Mammary epithelial cell (primary cell): ENCODE measurements at regions of chr20 and their contacts with region 1.

Region 1: DNA sequence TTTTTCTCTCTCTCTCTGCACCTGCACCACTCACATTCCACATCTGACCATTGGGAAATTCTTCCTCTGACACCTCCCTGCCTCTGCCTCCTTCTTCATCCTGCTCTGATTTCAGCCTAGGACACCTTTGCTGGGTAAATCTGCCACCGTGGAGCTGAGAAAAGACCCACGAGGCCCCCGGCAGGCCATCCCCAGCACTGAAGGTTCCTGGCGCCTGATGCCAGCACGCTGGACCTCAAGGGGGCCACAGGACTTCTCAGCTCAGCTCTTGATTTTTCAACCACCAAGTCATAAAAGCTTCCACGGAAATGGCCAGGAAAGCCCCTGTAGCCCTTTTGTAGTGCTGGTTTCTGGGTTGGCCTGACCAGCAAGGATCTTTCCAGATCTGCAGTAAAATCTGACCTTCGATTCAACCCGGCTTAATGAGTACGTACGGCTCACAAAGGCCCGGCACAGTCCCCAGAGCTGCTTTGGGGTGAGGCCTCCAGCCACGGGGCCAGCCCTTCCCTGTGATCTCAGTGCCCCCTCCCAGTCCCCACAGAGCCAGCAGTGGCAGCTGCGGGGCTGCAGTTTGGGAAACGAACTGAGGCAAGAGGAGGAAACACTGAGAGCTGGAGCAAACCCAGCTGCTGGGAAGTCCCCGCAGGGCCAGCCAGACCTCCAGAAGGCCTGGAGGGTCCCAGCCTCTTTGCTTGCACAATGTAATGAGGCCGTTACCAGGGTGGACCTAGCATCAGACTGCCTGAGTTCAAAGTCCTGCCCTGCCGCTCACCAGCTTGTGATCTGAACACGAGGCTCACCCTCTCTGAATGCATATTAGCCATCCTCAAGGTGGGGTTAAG is 157.5 kb downstream of the BMP7 start:
- DNase-seq: no peak
- H3K4me3 ChIP-seq: no peak overlapping the region
- H3K27ac ChIP-seq: no peak overlapping the region
- H3K4me1 ChIP-seq: no peaks in the 10 kb centered on the region
- H3K27me3 ChIP-seq: no peaks in the 10 kb centered on the region
- CTCF ChIP-seq: no peak

Region 2: GRCh38 chr20:57061058-57061900 is 47.7 kb before region 1 on chr20:
- CTCF ChIA-PET with region 1: no interaction called
- dilution Hi-C with region 1: loop called (anchors 5 kb)
- in situ Hi-C with region 1: no loop called
- intact Hi-C with region 1: no loop called
- DNase-seq: peak; percentile 21
- H3K4me3 ChIP-seq: no peak overlapping the region
- H3K27ac ChIP-seq: peak overlapping the region; percentile 49
- H3K4me1 ChIP-seq: peaks cover 14% of the 10 kb centered on the region
- H3K27me3 ChIP-seq: no peaks in the 10 kb centered on the region
- CTCF ChIP-seq: peak; percentile 17 to 47

Region 3: GRCh38 chr20:57148263-57148662 is 39.3 kb after region 1 on chr20:
- CTCF ChIA-PET with region 1: no interaction called
- dilution Hi-C with region 1: loop called (anchors 5 kb)
- in situ Hi-C with region 1: no loop called
- intact Hi-C with region 1: no loop called
- DNase-seq: no peak
- H3K4me3 ChIP-seq: no peak overlapping the region
- H3K27ac ChIP-seq: no peak overlapping the region
- H3K4me1 ChIP-seq: no peaks in the 10 kb centered on the region
- H3K27me3 ChIP-seq: peaks cover 16% of the 10 kb centered on the region
- CTCF ChIP-seq: no peak

Region 4: GRCh38 chr20:57180406-57181353 is 71.7 kb after region 1 on chr20:
- CTCF ChIA-PET with region 1: no interaction called
- dilution Hi-C with region 1: loop called (anchors 5 kb)
- in situ Hi-C with region 1: no loop called
- intact Hi-C with region 1: no loop called
- DNase-seq: no peak
- H3K4me3 ChIP-seq: no peak overlapping the region
- H3K27ac ChIP-seq: no peak overlapping the region
- H3K4me1 ChIP-seq: peaks cover 13% of the 10 kb centered on the region
- H3K27me3 ChIP-seq: no peaks in the 10 kb centered on the region
- CTCF ChIP-seq: peak in 1 of 2 donors; percentile 31